ENCODE measurements at regions of chr3 and their contacts with region 1.

Region 1: DNA sequence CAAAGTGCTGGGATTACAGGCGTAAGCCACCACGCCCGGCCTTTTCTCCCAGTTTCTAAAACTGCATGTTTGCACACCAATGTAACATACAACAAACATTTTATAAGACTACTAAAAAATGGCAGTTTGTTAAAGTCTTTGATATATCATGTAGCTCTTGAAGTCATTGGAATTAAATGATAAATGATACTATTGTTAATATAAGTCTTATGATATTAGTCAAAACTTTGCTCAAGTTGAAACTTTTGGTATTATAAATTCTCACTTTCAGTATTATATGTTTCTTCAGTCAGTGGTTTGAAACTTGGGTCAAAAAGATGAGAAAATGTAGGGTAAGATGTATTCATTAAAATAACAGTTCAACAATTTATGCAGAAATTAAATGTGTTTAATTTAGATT is 117.6 kb upstream of the TBL1XR1 start:
- DNase-seq: no peak
- H3K4me3 Mint-ChIP-seq: no peak overlapping the region
- H3K27ac Mint-ChIP-seq: peak overlapping the region; percentile 60
- H3K4me1 Mint-ChIP-seq: peaks cover 14% of the 10 kb centered on the region
- H3K27me3 Mint-ChIP-seq: no peaks in the 10 kb centered on the region

Region 2: DNA sequence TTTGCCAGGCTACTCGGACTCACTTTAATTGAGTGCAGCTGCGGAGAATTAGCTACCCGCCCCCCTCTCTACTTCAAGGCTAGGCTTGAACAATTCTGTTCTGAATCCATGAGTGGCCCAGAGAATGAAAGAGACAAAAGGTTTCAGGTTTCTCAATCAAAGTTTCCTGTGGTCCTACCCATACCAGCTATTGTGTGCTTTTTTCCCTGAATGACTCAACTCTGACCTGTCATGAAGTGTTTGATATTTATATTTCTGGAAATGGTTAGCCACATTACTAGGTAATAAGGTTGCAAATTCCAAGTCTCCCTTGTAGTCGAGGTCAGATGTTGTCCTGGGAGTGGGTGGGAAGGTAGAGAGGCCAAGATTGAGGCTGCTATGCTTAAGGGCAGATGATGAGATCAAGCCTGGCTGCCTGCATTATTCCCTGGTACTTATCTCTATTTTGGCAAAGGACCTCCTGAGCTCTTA is 275.0 kb after region 1 on chr3:
- intact Hi-C with region 1: loop called (anchors 5 kb)
- DNase-seq: no peak
- H3K4me3 Mint-ChIP-seq: no peak overlapping the region
- H3K27ac Mint-ChIP-seq: peak overlapping the region; percentile 12
- H3K4me1 Mint-ChIP-seq: peaks cover 28% of the 10 kb centered on the region
- H3K27me3 Mint-ChIP-seq: no peaks in the 10 kb centered on the region

Measured in activated CD4-positive, alpha-beta T cell treated with anti-CD3 and anti-CD28 coated beads, Interleukin-2, amount 10 ng/mL, durations not matched to agents 24 days and 14 days (primary cell).